ENCODE measurements at regions of chr11 and their contacts with region 1.

Region 1: DNA sequence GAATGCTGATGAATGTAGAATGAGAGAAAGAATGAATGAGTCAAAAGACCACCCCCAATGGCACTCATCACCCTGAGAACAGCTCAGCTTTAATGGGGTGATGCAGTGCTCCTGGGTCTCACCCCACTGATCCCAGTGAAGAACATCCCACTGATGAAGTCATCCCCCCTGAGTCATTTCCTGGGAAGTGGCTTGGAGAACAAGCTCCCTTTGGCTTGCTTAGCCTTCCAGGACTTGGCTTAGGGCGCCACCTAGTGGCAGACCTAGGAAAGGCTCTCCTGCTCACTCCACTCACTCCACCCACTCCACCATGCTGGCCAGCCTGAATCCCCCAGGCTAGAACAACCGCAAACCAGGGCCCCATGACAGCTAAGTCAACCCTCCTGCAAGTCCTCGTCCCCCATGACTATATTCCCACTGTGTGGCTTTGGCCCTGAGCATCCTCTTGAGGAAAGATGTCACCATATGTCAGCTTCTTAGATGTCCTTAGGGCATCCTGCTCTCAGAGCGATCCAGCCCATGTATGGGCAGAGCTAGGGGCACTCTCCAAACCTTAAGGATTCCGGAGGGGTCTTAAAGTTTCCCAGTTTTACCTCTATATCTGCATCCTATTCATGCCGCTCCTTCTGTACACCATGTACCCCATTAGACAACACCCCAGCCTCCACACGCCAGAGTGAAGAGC is 17.8 kb upstream of the TMPRSS13 start:
- DNase-seq: peak; percentile 57 to 86 (median 76)
- ATAC-seq: peak; percentile 64
- H3K4me3 ChIP-seq: no peak overlapping the region
- H3K4me3 Mint-ChIP-seq: peak overlapping the region in 9 of 10 donors; percentile 1 to 79 (median 58)
- H3K27ac ChIP-seq: no peak overlapping the region
- H3K27ac Mint-ChIP-seq: peak overlapping the region; percentile 30 to 91 (median 82)
- H3K4me1 ChIP-seq: peaks cover 49 to 51% of the 10 kb centered on the region in 2 donors
- H3K4me1 Mint-ChIP-seq: peaks cover 50 to 83% (median 60%) of the 10 kb centered on the region in 7 donors
- H3K27me3 ChIP-seq: no peaks in the 10 kb centered on the region
- H3K27me3 Mint-ChIP-seq: no peaks in the 10 kb centered on the region

Region 2: GRCh38 chr11:117817368-117818040 is 129.5 kb before region 1 on chr11:
- CTCF ChIA-PET with region 1: interaction called, 138 read pairs
- POLR2A ChIA-PET with region 1: interaction called, 6 read pairs
- intact Hi-C with region 1: loop called in 1 of 2 experiments (anchors 2 kb)
- DNase-seq: peak; percentile 64 to 91 (median 76)
- ATAC-seq: peak; percentile 46
- H3K4me3 ChIP-seq: no peak overlapping the region
- H3K4me3 Mint-ChIP-seq: peak overlapping the region; percentile 4 to 83 (median 38)
- H3K27ac ChIP-seq: no peak overlapping the region
- H3K27ac Mint-ChIP-seq: peak overlapping the region; percentile 61 to 93 (median 80)
- H3K4me1 ChIP-seq: peaks cover 44 to 56% of the 10 kb centered on the region in 2 donors
- H3K4me1 Mint-ChIP-seq: peaks cover 35 to 63% (median 51%) of the 10 kb centered on the region in 7 donors
- H3K27me3 ChIP-seq: no peaks in the 10 kb centered on the region
- H3K27me3 Mint-ChIP-seq: no peaks in the 10 kb centered on the region

Region 3: DNA sequence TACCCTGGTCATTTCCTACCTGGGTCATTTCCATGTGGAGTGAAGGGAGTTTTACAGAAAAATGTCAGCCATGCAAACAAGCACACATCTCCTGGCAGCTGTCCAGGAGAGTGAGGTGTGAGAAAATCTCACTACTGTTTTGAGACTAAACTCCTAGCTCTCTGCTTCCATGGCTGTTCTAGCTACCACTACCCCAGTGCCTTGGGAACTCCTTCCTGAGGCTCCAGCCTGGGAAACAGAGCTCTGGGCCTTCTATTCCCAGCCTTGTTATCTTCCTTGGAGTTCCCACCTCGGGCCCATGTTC is 15.0 kb before region 1 on chr11:
- CTCF ChIA-PET with region 1: interaction called, 18 read pairs
- POLR2A ChIA-PET with region 1: interaction called, 3 read pairs
- intact Hi-C with region 1: no loop called
- DNase-seq: peak in 1 of 9 donors; percentile 19
- ATAC-seq: no peak
- H3K4me3 ChIP-seq: no peak overlapping the region
- H3K4me3 Mint-ChIP-seq: peak overlapping the region in 3 of 10 donors; percentile 32 to 55 (median 51)
- H3K27ac ChIP-seq: no peak overlapping the region
- H3K27ac Mint-ChIP-seq: peak overlapping the region in 5 of 9 donors; percentile 25 to 90 (median 69)
- H3K4me1 ChIP-seq: peaks cover 32 to 40% of the 10 kb centered on the region in 2 donors
- H3K4me1 Mint-ChIP-seq: peaks cover 44 to 56% (median 49%) of the 10 kb centered on the region in 7 donors
- H3K27me3 ChIP-seq: no peaks in the 10 kb centered on the region
- H3K27me3 Mint-ChIP-seq: peaks cover 0 to 6% (median 0%) of the 10 kb centered on the region in 5 donors

Region 4: DNA sequence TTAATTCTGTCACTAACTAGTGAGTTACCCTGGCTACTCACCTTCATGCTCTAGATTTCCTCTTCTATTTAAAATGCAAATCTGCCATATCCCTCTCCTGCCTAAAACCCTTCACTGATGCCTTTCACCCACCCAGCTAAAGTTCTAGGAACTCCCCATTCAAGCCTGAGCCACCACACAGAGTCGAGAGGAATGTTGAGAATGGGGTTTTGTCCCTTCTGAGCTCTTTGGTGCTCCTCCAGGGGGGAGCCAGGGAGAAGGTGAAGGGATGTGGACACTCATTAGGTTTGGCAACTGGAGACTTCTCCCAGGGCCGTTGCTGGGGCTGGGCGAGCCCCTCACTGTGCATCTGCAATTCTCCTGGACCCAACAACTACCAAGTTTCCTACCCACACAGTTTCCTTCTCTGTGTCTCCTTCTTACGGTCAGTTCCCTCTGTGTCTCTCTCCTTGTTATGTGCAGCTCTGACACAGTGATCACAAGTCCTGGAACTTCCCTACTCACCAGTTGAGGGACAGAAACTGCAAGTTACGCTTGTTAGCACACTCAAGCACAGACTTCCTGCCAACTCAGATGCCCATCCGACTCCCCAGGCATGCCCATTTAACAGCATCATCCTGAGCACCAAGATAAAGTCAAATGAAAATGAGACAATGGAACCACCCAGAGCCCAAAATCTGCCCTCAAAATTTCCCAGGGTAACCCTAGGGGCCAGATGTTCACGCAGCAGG is 32.7 kb after region 1 on chr11:
- CTCF ChIA-PET with region 1: interaction called, 42 read pairs
- POLR2A ChIA-PET with region 1: interaction called, 302 read pairs
- intact Hi-C with region 1: no loop called
- DNase-seq: no peak
- ATAC-seq: peak; percentile 85
- H3K4me3 ChIP-seq: no peak overlapping the region
- H3K4me3 Mint-ChIP-seq: peak overlapping the region in 8 of 10 donors; percentile 14 to 55 (median 32)
- H3K27ac ChIP-seq: no peak overlapping the region
- H3K27ac Mint-ChIP-seq: peak overlapping the region in 8 of 9 donors; percentile 12 to 76 (median 71)
- H3K4me1 ChIP-seq: peaks cover 35 to 42% of the 10 kb centered on the region in 2 donors
- H3K4me1 Mint-ChIP-seq: peaks cover 39 to 79% (median 69%) of the 10 kb centered on the region in 7 donors
- H3K27me3 ChIP-seq: no peaks in the 10 kb centered on the region
- H3K27me3 Mint-ChIP-seq: no peaks in the 10 kb centered on the region

Region 5: GRCh38 chr11:118002541-118003423 is 55.8 kb after region 1 on chr11:
- CTCF ChIA-PET with region 1: interaction called, 19 read pairs
- POLR2A ChIA-PET with region 1: interaction called, 107 read pairs
- intact Hi-C with region 1: loop called (anchors 1 kb)
- DNase-seq: peak in 1 of 9 donors; percentile 70
- ATAC-seq: peak; percentile 55
- H3K4me3 ChIP-seq: peak overlapping the region; percentile 23
- H3K4me3 Mint-ChIP-seq: peak overlapping the region; percentile 1 to 82 (median 60)
- H3K27ac ChIP-seq: peak overlapping the region; percentile 58
- H3K27ac Mint-ChIP-seq: peak overlapping the region; percentile 51 to 98 (median 87)
- H3K4me1 ChIP-seq: peaks cover 64 to 96% of the 10 kb centered on the region in 2 donors
- H3K4me1 Mint-ChIP-seq: peaks cover 66 to 97% (median 80%) of the 10 kb centered on the region in 7 donors
- H3K27me3 ChIP-seq: no peaks in the 10 kb centered on the region
- H3K27me3 Mint-ChIP-seq: no peaks in the 10 kb centered on the region

Region 6: GRCh38 chr11:118046051-118046963 is 99.3 kb after region 1 on chr11:
- CTCF ChIA-PET with region 1: interaction called, 125 read pairs
- POLR2A ChIA-PET with region 1: interaction called, 146 read pairs
- intact Hi-C with region 1: loop called in 1 of 2 experiments (anchors 1 kb)
- DNase-seq: peak in 7 of 9 donors; percentile 44 to 71 (median 52)
- ATAC-seq: peak; percentile 90
- H3K4me3 ChIP-seq: no peak overlapping the region
- H3K4me3 Mint-ChIP-seq: peak overlapping the region in 9 of 10 donors; percentile 26 to 66 (median 44)
- H3K27ac ChIP-seq: peak overlapping the region; percentile 68
- H3K27ac Mint-ChIP-seq: peak overlapping the region; percentile 68 to 94 (median 87)
- H3K4me1 ChIP-seq: peaks cover 86 to 87% of the 10 kb centered on the region in 2 donors
- H3K4me1 Mint-ChIP-seq: peaks cover 69 to 96% (median 87%) of the 10 kb centered on the region in 7 donors
- H3K27me3 ChIP-seq: no peaks in the 10 kb centered on the region
- H3K27me3 Mint-ChIP-seq: no peaks in the 10 kb centered on the region

Region 7: GRCh38 chr11:118227865-118228785 is 281.1 kb after region 1 on chr11:
- CTCF ChIA-PET with region 1: no interaction called
- POLR2A ChIA-PET with region 1: no interaction called
- intact Hi-C with region 1: loop called in 1 of 2 experiments (anchors 5 kb)
- DNase-seq: peak in 4 of 9 donors; percentile 23 to 49 (median 41)
- ATAC-seq: peak; percentile 34
- H3K4me3 ChIP-seq: peak overlapping the region; percentile 4
- H3K4me3 Mint-ChIP-seq: peak overlapping the region in 9 of 10 donors; percentile 3 to 77 (median 66)
- H3K27ac ChIP-seq: peak overlapping the region; percentile 61
- H3K27ac Mint-ChIP-seq: peak overlapping the region in 1 of 9 donors; percentile 91
- H3K4me1 ChIP-seq: peaks cover 59 to 70% of the 10 kb centered on the region in 2 donors
- H3K4me1 Mint-ChIP-seq: peaks cover 10 to 55% (median 46%) of the 10 kb centered on the region in 7 donors
- H3K27me3 ChIP-seq: no peaks in the 10 kb centered on the region
- H3K27me3 Mint-ChIP-seq: no peaks in the 10 kb centered on the region